ENCODE measurements at regions of chr11 and their contacts with region 1.

Region 1: GRCh38 chr11:118928108-118928870 is 2.6 kb upstream of the BCL9L start:
- DNase-seq: peak; percentile 90 to 98 (median 96)
- H3K4me3 ChIP-seq: peak overlapping the region; percentile 70
- H3K4me3 Mint-ChIP-seq: peak overlapping the region; percentile 83 to 100 (median 98)
- H3K27ac ChIP-seq: peak overlapping the region; percentile 96
- H3K27ac Mint-ChIP-seq: peak overlapping the region; percentile 92 to 100 (median 99)
- H3K4me1 ChIP-seq: peaks cover 31% of the 10 kb centered on the region
- H3K4me1 Mint-ChIP-seq: peaks cover 39 to 51% (median 41%) of the 10 kb centered on the region in 3 donors
- H3K27me3 ChIP-seq: no peaks in the 10 kb centered on the region
- H3K27me3 Mint-ChIP-seq: peaks cover 0 to 14% of the 10 kb centered on the region in 2 donors

Region 2: DNA sequence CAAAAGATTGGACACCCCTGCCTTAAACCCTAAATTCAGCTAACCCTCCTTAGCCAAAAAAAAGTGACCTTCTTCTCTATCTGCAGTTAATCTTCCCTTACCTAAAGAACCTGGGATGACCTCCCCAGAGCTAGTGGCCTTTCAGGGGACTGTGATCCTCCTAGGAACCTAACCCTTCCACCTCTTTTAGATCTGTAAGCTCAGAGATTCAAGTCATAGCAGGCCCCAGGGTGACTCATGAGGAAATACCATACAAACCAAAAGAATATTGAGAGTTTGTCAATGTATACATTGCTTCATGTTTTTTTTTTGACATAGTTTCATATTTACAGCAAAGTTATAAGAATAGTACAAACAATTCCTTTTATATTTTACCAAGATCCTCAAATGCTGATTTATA is 82.9 kb before region 1 on chr11:
- CTCF ChIA-PET with region 1: no interaction called
- POLR2A ChIA-PET with region 1: no interaction called
- DNase-seq: no peak
- H3K4me3 ChIP-seq: no peak overlapping the region
- H3K4me3 Mint-ChIP-seq: no peak overlapping the region
- H3K27ac ChIP-seq: no peak overlapping the region
- H3K27ac Mint-ChIP-seq: peak overlapping the region in 3 of 8 donors; percentile 57 to 78 (median 64)
- H3K4me1 ChIP-seq: peaks cover 4% of the 10 kb centered on the region
- H3K4me1 Mint-ChIP-seq: peaks cover 17 to 32% (median 24%) of the 10 kb centered on the region in 3 donors
- H3K27me3 ChIP-seq: no peaks in the 10 kb centered on the region
- H3K27me3 Mint-ChIP-seq: no peaks in the 10 kb centered on the region

Region 3: GRCh38 chr11:118870396-118871345 is 57.6 kb before region 1 on chr11:
- CTCF ChIA-PET with region 1: interaction called, 22 read pairs
- POLR2A ChIA-PET with region 1: interaction called, 11 read pairs
- DNase-seq: peak in 1 of 5 donors; percentile 58
- H3K4me3 ChIP-seq: peak overlapping the region; percentile 35
- H3K4me3 Mint-ChIP-seq: peak overlapping the region; percentile 72 to 92 (median 83)
- H3K27ac ChIP-seq: peak overlapping the region; percentile 87
- H3K27ac Mint-ChIP-seq: peak overlapping the region; percentile 98 to 100 (median 99)
- H3K4me1 ChIP-seq: peaks cover 62% of the 10 kb centered on the region
- H3K4me1 Mint-ChIP-seq: peaks cover 47 to 69% (median 56%) of the 10 kb centered on the region in 3 donors
- H3K27me3 ChIP-seq: no peaks in the 10 kb centered on the region
- H3K27me3 Mint-ChIP-seq: no peaks in the 10 kb centered on the region

Region 4: DNA sequence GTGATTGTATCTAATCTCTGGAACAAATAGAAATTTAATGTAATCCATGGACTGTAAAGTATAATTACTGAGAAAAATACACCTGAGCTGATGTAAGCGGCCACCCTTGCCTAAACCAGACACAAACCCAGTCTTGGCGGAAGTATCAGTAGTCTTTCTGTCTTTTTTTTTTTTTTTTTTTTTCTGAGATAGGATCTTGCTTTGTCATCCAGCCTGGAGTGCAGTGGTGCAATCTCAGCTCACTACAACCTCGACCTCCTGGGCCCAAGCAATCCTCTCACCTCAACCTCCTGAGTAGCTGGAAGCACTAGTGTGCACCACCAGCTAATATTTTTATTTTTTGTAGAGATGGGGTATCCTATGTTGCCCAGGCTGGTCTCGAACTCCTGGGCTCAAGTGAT is 50.1 kb before region 1 on chr11:
- CTCF ChIA-PET with region 1: interaction called, 14 read pairs
- POLR2A ChIA-PET with region 1: interaction called, 8 read pairs
- DNase-seq: peak in 1 of 5 donors; percentile 58
- H3K4me3 ChIP-seq: peak overlapping the region; percentile 11
- H3K4me3 Mint-ChIP-seq: peak overlapping the region in 3 of 7 donors; percentile 2 to 25 (median 24)
- H3K27ac ChIP-seq: no peak overlapping the region
- H3K27ac Mint-ChIP-seq: peak overlapping the region; percentile 77 to 99 (median 98)
- H3K4me1 ChIP-seq: peaks cover 89% of the 10 kb centered on the region
- H3K4me1 Mint-ChIP-seq: peaks cover 76 to 92% (median 90%) of the 10 kb centered on the region in 3 donors
- H3K27me3 ChIP-seq: no peaks in the 10 kb centered on the region
- H3K27me3 Mint-ChIP-seq: no peaks in the 10 kb centered on the region

Region 5: DNA sequence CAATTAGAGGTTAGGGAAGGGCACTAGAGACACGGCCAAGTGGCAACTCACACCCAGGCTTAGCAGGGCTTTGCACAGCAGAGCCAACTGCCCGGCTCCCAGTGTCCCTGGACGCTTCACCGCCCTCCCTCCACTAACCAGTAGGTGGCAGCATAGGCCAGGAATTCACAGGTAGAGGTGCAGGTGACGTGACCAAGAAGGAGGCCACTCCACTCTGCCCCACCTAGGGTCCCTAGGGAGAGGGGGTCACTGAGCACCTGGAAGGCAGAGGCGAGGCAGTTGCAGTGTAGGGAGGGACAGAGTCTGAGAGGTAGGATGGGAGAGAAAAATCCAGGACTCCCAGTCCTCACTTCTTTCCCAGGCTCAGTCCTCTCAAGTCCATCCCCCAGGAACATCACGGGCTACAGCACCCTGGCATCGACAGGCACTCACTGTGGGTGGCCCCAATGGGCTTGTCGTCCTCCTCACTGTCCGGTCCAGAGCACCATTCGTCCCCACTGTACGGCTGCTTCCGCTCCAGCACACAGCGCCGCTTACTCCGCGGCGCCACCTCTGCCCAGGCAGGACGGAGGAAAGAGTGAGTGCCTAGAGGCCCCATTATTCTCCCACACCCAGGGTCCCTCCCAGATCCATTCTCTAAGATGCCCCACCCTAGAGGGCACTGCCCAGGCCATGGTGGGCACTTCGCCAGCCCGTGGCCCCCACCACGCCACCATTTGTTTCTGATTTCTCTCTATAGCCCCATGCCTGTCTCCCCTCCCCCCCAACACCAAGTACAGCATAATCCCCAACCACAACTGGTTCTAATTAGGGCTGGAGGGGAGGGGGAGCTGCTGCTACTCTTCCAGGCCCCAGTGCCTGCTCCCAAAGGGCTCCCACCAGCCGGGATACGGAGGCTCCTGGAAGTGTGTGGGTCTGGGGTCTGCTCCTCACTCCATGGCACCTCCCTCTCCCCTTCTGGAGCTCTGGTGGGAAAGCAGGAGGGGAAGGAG is 20.9 kb before region 1 on chr11:
- CTCF ChIA-PET with region 1: no interaction called
- POLR2A ChIA-PET with region 1: interaction called, 203 read pairs
- DNase-seq: peak; percentile 74 to 88 (median 82)
- H3K4me3 ChIP-seq: no peak overlapping the region
- H3K4me3 Mint-ChIP-seq: peak overlapping the region in 5 of 7 donors; percentile 21 to 65 (median 34)
- H3K27ac ChIP-seq: no peak overlapping the region
- H3K27ac Mint-ChIP-seq: peak overlapping the region; percentile 81 to 100 (median 96)
- H3K4me1 ChIP-seq: peaks cover 57% of the 10 kb centered on the region
- H3K4me1 Mint-ChIP-seq: peaks cover 42 to 57% (median 47%) of the 10 kb centered on the region in 3 donors
- H3K27me3 ChIP-seq: no peaks in the 10 kb centered on the region
- H3K27me3 Mint-ChIP-seq: no peaks in the 10 kb centered on the region

Region 6: GRCh38 chr11:118939953-118940598 is 11.8 kb after region 1 on chr11:
- CTCF ChIA-PET with region 1: interaction called, 17 read pairs
- POLR2A ChIA-PET with region 1: interaction called, 4 read pairs
- DNase-seq: peak in 3 of 5 donors; percentile 19 to 62 (median 54)
- H3K4me3 ChIP-seq: peak overlapping the region; percentile 20
- H3K4me3 Mint-ChIP-seq: peak overlapping the region in 1 of 7 donors; percentile 37
- H3K27ac ChIP-seq: no peak overlapping the region
- H3K27ac Mint-ChIP-seq: peak overlapping the region in 1 of 8 donors; percentile 66
- H3K4me1 ChIP-seq: peaks cover 28% of the 10 kb centered on the region
- H3K4me1 Mint-ChIP-seq: peaks cover 18 to 37% (median 31%) of the 10 kb centered on the region in 3 donors
- H3K27me3 ChIP-seq: no peaks in the 10 kb centered on the region
- H3K27me3 Mint-ChIP-seq: peaks cover 0 to 6% of the 10 kb centered on the region in 2 donors

Region 7: GRCh38 chr11:118980191-118980881 is 52.0 kb after region 1 on chr11:
- CTCF ChIA-PET with region 1: no interaction called
- POLR2A ChIA-PET with region 1: no interaction called
- DNase-seq: no peak
- H3K4me3 ChIP-seq: no peak overlapping the region
- H3K4me3 Mint-ChIP-seq: no peak overlapping the region
- H3K27ac ChIP-seq: peak overlapping the region; percentile 44
- H3K27ac Mint-ChIP-seq: no peak overlapping the region
- H3K4me1 ChIP-seq: no peaks in the 10 kb centered on the region
- H3K4me1 Mint-ChIP-seq: no peaks in the 10 kb centered on the region
- H3K27me3 ChIP-seq: no peaks in the 10 kb centered on the region
- H3K27me3 Mint-ChIP-seq: peaks cover 6 to 20% of the 10 kb centered on the region in 2 donors

Measured in CD8-positive, alpha-beta memory T cell (primary cell).